Dorsolateral prefrontal cortex (tissue), 120 donors: ENCODE measurements at regions of chrX and their contacts with region 1.

Region 1: GRCh38 chrX:69615779-69616456 is at the start of gene EDA:
- DNase-seq: peak; percentile 57 to 89 (median 75)
- H3K4me3 ChIP-seq: peak within 1 kb of the TSS; percentile 25 to 79 (median 62)
- H3K27ac ChIP-seq: peak within 1 kb of the TSS in 29 of 59 donors; percentile 7 to 77 (median 54)
- H3K27me3 ChIP-seq: peaks cover 0 to 80% (median 24%) of the 10 kb centered on the region in 45 donors
- CTCF ChIP-seq: peak in 6 of 56 donors; percentile 10 to 31 (median 17)
- total RNA-seq, gene EDA: 0.97 to 7.8 (median 3.6) TPM

Region 2: DNA sequence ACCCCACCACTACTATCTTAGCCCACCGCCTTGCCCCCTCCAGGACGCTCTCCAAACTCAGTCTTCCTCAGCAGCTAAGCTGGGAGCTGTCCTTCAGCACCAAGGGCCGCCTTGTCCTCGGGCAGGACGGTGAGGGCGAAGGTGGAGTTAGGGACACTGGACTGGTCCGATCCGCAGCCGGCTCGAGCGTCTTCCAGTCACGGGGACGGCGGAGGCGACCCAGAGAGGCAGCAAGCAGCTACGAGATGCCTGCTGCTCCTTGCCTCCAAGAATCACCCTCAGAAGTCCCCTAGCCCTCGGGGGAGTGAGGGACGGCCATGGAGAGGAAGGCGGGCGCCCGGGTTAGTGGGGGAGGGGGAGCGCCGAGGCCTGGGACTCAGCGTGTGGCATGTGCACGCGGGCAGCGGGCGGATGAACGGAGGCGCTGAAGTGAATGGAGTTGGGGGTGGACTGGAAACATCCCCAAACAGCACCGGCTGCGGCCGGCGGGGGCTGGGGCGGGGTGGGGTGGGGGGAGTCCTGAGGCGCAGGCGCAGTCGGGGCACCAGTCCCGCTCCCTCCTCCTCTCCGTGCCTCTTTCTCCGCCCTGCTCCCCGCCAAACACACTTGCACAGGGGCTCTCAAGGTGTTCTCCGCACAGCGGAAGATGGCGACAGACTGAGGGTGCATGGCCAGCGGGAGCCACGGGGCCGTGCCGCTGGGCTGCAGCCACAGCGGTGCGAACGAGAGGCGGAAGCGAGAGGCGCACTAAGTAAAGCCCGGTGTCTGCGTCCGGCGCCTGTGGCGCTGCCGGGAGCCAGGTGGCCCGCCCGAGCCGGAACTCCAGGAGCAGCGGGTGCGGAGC is 111.9 kb before region 1 on chrX and contains the start of gene NALF2:
- intact Hi-C with region 1: loop called (anchors 2 to 5 kb)
- DNase-seq: peak in 4 of 10 donors; percentile 31 to 61 (median 42)
- H3K4me3 ChIP-seq: peak within 1 kb of the TSS; percentile 35 to 69 (median 53)
- H3K27ac ChIP-seq: peak within 1 kb of the TSS in 27 of 59 donors; percentile 6 to 70 (median 41)
- H3K27me3 ChIP-seq: peaks cover 0 to 72% (median 22%) of the 10 kb centered on the region in 45 donors
- CTCF ChIP-seq: peak in 27 of 56 donors; percentile 2 to 36 (median 13)
- total RNA-seq, gene NALF2: 1.5 to 7.6 (median 3.5) TPM

Region 3: GRCh38 chrX:69538321-69538876 is 77.5 kb before region 1 on chrX:
- intact Hi-C with region 1: loop called (anchors 5 to 10 kb)
- DNase-seq: peak in 7 of 10 donors; percentile 24 to 71 (median 55)
- H3K4me3 ChIP-seq: peak overlapping the region in 55 of 59 donors; percentile 19 to 64 (median 46)
- H3K27ac ChIP-seq: peak overlapping the region in 3 of 59 donors; percentile 46 to 68 (median 56)
- H3K27me3 ChIP-seq: peaks cover 0 to 86% (median 36%) of the 10 kb centered on the region in 45 donors
- CTCF ChIP-seq: peak in 55 of 56 donors; percentile 28 to 82 (median 68)

Region 4: DNA sequence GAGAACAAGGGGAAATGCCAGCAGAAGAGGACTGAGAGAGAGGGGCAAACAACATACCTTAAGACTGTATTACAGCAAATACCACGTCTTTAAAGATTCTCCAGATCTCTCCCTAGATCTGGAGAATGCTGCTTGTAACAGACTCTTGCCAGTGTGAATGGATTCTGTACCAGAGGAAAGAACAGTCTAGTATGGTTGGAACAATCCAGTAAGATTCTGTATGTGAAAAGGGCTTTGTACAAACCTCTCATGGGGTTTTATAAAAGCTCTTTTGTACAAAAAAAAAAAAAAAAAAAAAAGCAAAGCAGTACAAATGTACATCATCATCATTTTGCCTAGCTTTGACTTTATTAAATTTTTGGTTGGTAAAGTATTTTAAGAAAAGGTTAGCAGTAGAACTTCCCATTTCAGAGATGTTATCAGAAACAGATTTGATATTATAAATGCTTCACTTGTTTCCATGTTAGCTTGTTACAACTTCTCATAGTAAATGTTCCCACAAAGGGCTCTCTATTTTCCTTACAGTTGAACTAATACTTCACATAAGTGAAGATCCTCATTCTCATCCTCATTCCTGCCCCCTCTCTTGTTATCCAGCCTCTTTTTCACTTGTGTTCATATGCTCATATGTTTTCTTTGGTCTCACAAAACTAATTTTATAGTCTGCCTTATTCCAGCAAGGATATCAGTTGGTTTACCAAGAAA is 144.2 kb after region 1 on chrX:
- intact Hi-C with region 1: loop called in 1 of 2 experiments (anchors 5 kb)
- DNase-seq: no peak
- H3K4me3 ChIP-seq: peak overlapping the region in 6 of 59 donors; percentile 1 to 30 (median 20)
- H3K27ac ChIP-seq: peak overlapping the region in 54 of 59 donors; percentile 14 to 88 (median 69)
- H3K27me3 ChIP-seq: peaks cover 0 to 53% (median 9%) of the 10 kb centered on the region in 45 donors
- CTCF ChIP-seq: peak in 1 of 56 donors; percentile 9

Region 5: GRCh38 chrX:70030301-70030767 is 414.4 kb after region 1 on chrX:
- intact Hi-C with region 1: loop called in 1 of 2 experiments (anchors 10 kb)
- DNase-seq: peak in 5 of 10 donors; percentile 9 to 50 (median 16)
- H3K4me3 ChIP-seq: no peak overlapping the region
- H3K27ac ChIP-seq: no peak overlapping the region
- H3K27me3 ChIP-seq: peaks cover 0 to 95% (median 37%) of the 10 kb centered on the region in 45 donors
- CTCF ChIP-seq: peak in 55 of 56 donors; percentile 39 to 80 (median 66)